ENCODE measurements at regions of chr17 and their contacts with region 1.

Region 1: DNA sequence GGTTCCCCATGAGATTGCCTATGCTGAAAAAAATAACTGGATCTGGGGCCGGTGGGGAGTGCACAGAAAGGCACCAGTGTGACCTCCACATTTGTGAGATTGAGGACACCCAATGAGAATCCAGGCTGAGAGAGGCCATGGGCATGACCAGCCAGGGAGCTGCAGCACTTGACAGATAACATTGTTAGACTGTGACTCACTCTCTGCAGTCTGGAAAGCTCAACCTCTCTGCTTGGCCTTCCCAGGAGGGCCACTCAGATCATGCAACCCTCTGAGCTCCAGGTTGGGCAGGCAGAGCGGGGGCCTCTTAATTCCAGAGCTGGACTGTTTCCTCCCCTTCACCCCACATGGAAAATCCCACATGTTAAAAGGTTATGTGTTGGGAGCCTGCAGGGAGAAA is 30.1 kb downstream of the FZD2 start:
- DNase-seq: no peak
- ATAC-seq: peak; percentile 97
- H3K4me3 ChIP-seq: no peak overlapping the region
- H3K27ac ChIP-seq: peak overlapping the region; percentile 83
- H3K4me1 ChIP-seq: peaks cover 27% of the 10 kb centered on the region
- H3K27me3 ChIP-seq: no peaks in the 10 kb centered on the region
- CTCF ChIP-seq: no peak

Region 2: DNA sequence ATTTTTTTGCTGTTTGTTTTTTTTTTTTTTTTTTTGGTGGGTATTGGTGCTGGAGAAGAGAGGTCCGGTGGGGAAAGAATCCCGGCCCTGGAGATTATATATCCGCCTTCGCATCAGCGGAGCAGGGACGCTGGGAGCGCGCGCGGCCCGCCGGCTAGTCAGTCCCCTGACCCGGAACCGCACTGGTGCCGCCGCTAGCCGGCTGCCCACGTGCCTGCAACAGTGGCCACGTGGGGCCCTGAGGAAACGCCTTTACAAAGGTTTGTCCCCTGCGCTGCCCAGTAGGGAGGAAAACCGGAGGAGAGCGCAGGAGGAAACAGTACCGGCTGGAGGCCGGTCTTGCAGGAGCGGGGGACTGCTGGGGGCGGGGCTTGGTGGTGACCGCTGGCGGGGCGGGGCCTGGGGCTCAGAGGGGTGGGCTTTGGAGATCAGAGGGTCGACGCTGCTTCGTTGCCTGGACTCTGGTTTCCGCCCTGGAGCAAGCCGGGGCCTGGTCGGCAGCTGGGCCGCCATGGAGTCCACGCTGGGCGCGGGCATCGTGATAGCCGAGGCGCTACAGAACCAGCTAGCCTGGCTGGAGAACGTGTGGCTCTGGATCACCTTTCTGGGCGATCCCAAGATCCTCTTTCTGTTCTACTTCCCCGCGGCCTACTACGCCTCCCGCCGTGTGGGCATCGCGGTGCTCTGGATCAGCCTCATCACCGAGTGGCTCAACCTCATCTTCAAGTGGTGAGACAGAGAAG is 516.7 kb before region 1 on chr17 and contains the start of gene G6PC3:
- CTCF ChIA-PET with region 1: no interaction called
- POLR2A ChIA-PET with region 1: no interaction called
- in situ Hi-C with region 1: no loop called
- intact Hi-C with region 1: no loop called
- DNase-seq: no peak
- ATAC-seq: peak; percentile 91
- H3K4me3 ChIP-seq: peak within 1 kb of the TSS; percentile 71 to 87
- H3K27ac ChIP-seq: peak within 1 kb of the TSS; percentile 95
- H3K4me1 ChIP-seq: peaks cover 20% of the 10 kb centered on the region
- H3K27me3 ChIP-seq: no peaks in the 10 kb centered on the region
- CTCF ChIP-seq: no peak
- total RNA-seq, gene G6PC3: 42.7 TPM

Region 3: GRCh38 chr17:44451832-44452231 is 135.5 kb before region 1 on chr17:
- CTCF ChIA-PET with region 1: no interaction called
- POLR2A ChIA-PET with region 1: interaction called, 13 read pairs
- in situ Hi-C with region 1: no loop called
- intact Hi-C with region 1: no loop called
- DNase-seq: no peak
- ATAC-seq: no peak
- H3K4me3 ChIP-seq: no peak overlapping the region
- H3K27ac ChIP-seq: no peak overlapping the region
- H3K4me1 ChIP-seq: no peaks in the 10 kb centered on the region
- H3K27me3 ChIP-seq: no peaks in the 10 kb centered on the region
- CTCF ChIP-seq: no peak

Region 4: DNA sequence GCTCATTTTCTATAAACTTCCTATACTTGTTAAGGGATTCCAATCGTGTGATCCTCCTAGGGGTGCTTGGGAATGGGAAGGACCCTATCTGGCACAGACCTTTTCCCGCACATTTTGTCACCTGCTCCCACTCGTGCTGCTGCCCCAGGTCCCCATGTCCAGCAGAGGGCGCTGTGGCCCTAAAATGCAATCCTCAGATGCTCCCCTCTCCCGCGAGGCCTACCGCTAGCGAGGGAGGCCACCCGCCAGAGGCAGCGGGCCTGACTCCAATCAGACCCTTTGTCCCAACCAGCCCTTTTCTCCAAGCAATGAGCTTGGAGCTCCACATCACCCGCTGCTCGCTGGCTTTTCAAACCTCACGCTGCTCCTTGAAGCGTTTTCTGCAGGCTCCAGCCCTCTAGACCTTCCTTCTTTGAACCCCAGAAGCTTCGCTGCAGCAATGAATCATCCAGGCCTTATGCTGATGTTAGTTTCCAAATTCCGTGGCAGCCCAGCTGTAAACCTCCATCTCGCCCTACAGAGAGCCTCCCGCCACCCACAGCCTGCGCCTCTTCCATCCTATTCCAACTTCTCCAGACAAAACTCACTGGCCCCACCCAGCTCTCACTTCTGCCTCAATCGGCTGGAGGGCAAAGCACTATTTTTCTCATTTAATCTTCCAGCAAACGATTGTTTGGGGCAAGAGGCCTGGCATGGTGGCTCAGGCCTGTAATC is 53.6 kb before region 1 on chr17:
- CTCF ChIA-PET with region 1: interaction called, 12 read pairs
- POLR2A ChIA-PET with region 1: no interaction called
- in situ Hi-C with region 1: no loop called
- intact Hi-C with region 1: no loop called
- DNase-seq: no peak
- ATAC-seq: peak; percentile 96
- H3K4me3 ChIP-seq: peak overlapping the region in 1 of 2 experiments; percentile 27; a peak in 2 of 4 replicates
- H3K27ac ChIP-seq: peak overlapping the region; percentile 86
- H3K4me1 ChIP-seq: peaks cover 15% of the 10 kb centered on the region
- H3K27me3 ChIP-seq: no peaks in the 10 kb centered on the region
- CTCF ChIP-seq: peak; percentile 88

Region 5: GRCh38 chr17:44547625-44548267 is 39.6 kb before region 1 on chr17:
- CTCF ChIA-PET with region 1: no interaction called
- POLR2A ChIA-PET with region 1: interaction called, 15 read pairs
- in situ Hi-C with region 1: no loop called
- intact Hi-C with region 1: no loop called
- DNase-seq: no peak
- ATAC-seq: no peak
- H3K4me3 ChIP-seq: no peak overlapping the region
- H3K27ac ChIP-seq: peak overlapping the region; percentile 56
- H3K4me1 ChIP-seq: peaks cover 36% of the 10 kb centered on the region
- H3K27me3 ChIP-seq: no peaks in the 10 kb centered on the region
- CTCF ChIP-seq: no peak

Measured in Panc1 (cell line).